Right cardiac atrium (tissue), 5 donors: ENCODE measurements at regions of chr10 and their contacts with region 1.

Region 1: GRCh38 chr10:5776136-5776880 is 36.9 kb downstream of the GDI2 start:
- DNase-seq: no peak
- ATAC-seq: peak in 1 of 2 donors; percentile 27
- H3K4me3 ChIP-seq: no peak overlapping the region
- H3K27ac ChIP-seq: peak overlapping the region; percentile 15
- H3K4me1 ChIP-seq: peaks cover 2% of the 10 kb centered on the region
- H3K27me3 ChIP-seq: no peaks in the 10 kb centered on the region

Region 2: DNA sequence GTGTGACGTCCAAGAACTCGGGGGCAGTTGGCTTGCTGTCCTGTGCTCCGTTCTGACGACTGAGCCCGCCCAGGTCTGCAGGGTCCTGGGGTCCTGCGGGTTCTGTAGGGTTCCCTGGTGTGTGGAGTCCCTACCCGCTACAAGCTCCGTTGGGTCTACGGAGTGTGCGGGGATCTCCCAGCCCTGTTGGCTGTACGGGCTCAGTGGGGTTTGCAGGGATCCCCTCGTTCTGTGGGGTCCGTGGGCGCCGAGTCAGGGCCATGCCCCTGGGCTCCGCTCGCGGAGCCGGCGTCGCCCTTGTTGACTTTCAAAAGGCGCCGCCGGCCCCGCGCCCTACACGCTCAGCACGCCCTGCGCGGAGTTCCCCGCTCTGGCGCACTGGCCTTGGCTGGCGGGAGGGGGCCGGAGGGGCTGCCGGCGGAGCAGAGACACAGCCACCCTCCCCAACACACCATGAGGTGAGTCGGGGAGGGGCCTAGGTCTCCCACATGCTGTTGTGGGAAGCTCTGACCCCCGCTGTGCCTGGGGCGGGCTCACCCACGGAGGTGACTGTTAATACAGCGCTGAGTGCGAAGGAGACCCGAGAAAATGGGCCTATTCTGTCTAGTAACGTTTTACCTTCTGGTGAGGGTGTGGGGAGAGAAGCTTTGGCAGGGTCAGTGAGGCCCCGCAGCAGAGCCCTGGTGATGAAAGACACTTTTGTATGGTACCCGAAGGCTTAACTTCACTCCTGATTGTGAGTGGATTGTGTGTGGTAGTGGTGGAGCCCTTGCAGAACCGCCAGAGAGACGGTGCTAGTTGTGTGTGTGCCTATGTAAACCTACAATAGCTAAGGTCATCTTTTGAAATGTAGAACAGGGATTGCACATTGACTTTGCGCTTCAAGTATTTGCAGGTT is 83.6 kb before region 1 on chr10:
- intact Hi-C with region 1: loop called in 1 of 4 experiments (anchors 10 kb)
- DNase-seq: peak; percentile 33 to 81 (median 75)
- ATAC-seq: peak; percentile 86 to 89
- H3K4me3 ChIP-seq: peak overlapping the region; percentile 44
- H3K27ac ChIP-seq: no peak overlapping the region
- H3K4me1 ChIP-seq: peaks cover 6% of the 10 kb centered on the region
- H3K27me3 ChIP-seq: no peaks in the 10 kb centered on the region